ENCODE measurements at regions of chr17 and their contacts with region 1.

Region 1: GRCh38 chr17:1590031-1590748 is 27.6 kb upstream of the PITPNA start:
- DNase-seq: no peak
- ATAC-seq: no peak
- H3K4me3 ChIP-seq: no peak overlapping the region
- H3K4me3 Mint-ChIP-seq: no peak overlapping the region
- H3K27ac ChIP-seq: no peak overlapping the region
- H3K27ac Mint-ChIP-seq: peak overlapping the region; percentile 74
- H3K4me1 ChIP-seq: peaks cover 24 to 35% of the 10 kb centered on the region in 2 donors
- H3K4me1 Mint-ChIP-seq: peaks cover 27% of the 10 kb centered on the region
- H3K27me3 ChIP-seq: no peaks in the 10 kb centered on the region
- H3K27me3 Mint-ChIP-seq: no peaks in the 10 kb centered on the region
- CTCF ChIP-seq: no peak

Region 2: GRCh38 chr17:1606352-1607033 is 16.3 kb after region 1 on chr17:
- CTCF ChIA-PET with region 1: interaction called, 3 read pairs
- POLR2A ChIA-PET with region 1: interaction called, 7 read pairs
- intact Hi-C with region 1: loop called (anchors 1 kb)
- DNase-seq: peak; percentile 18
- ATAC-seq: no peak
- H3K4me3 ChIP-seq: no peak overlapping the region
- H3K4me3 Mint-ChIP-seq: peak overlapping the region; percentile 72
- H3K27ac ChIP-seq: no peak overlapping the region
- H3K27ac Mint-ChIP-seq: peak overlapping the region; percentile 83
- H3K4me1 ChIP-seq: peaks cover 0 to 19% of the 10 kb centered on the region in 2 donors
- H3K4me1 Mint-ChIP-seq: peaks cover 27% of the 10 kb centered on the region
- H3K27me3 ChIP-seq: no peaks in the 10 kb centered on the region
- H3K27me3 Mint-ChIP-seq: no peaks in the 10 kb centered on the region
- CTCF ChIP-seq: no peak